ENCODE measurements at regions of chr3 and their contacts with region 1.

Region 1: DNA sequence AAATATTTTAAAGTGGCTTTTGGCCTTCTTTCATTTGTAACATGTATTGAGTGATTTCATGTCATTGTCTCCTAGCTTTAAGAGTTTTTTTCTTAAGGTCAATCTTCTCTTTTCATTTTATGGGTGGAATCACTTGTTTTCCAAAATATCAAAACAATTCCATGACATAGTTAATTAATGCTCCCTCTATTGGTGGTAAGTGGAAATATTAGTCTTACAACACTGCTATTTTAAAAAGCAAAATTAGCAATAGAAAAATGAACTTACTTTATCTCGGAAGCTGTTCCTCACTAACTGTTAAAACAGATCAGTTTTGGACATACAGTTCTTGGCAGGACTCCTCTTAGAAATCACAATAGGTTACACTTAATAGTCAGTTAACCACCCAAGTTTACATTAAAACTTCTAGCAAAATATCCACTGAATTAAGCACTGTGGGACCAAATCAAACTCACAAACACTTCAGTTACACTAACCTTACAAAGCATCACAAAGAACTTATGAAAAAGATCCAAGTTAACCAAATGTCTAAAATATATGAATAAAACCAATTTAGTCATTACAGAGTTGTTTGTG is 42.4 kb downstream of the TIGIT start:
- DNase-seq: no peak
- H3K4me3 ChIP-seq: no peak overlapping the region
- H3K27ac ChIP-seq: no peak overlapping the region
- H3K4me1 ChIP-seq: peaks cover 0 to 10% (median 6%) of the 10 kb centered on the region in 4 experiments; a peak in 4 of 7 replicates
- H3K27me3 ChIP-seq: no peaks in the 10 kb centered on the region
- CTCF ChIP-seq: peak in 1 of 3 experiments; percentile 25; a peak in 1 of 4 replicates
- EP300 ChIP-seq: no peak
- POLR2A ChIP-seq: no peak
- RAD21 ChIP-seq: no peak

Region 2: GRCh38 chr3:114272271-114272670 is 63.9 kb before region 1 on chr3:
- CTCF ChIA-PET with region 1: no interaction called
- POLR2A ChIA-PET with region 1: no interaction called
- DNase-seq: no peak
- H3K4me3 ChIP-seq: no peak overlapping the region
- H3K27ac ChIP-seq: no peak overlapping the region
- H3K4me1 ChIP-seq: no peaks in the 10 kb centered on the region
- H3K27me3 ChIP-seq: no peaks in the 10 kb centered on the region
- CTCF ChIP-seq: no peak
- EP300 ChIP-seq: no peak
- POLR2A ChIP-seq: no peak
- RAD21 ChIP-seq: no peak

Region 3: GRCh38 chr3:114356066-114356465 is 19.9 kb after region 1 on chr3:
- CTCF ChIA-PET with region 1: interaction called, 12 read pairs
- POLR2A ChIA-PET with region 1: no interaction called
- DNase-seq: peak in 1 of 2 experiments; percentile 19
- H3K4me3 ChIP-seq: peak overlapping the region in 1 of 4 experiments; percentile 25; a peak in 2 of 8 replicates
- H3K27ac ChIP-seq: no peak overlapping the region
- H3K4me1 ChIP-seq: peaks cover 7 to 18% (median 12%) of the 10 kb centered on the region in 4 experiments
- H3K27me3 ChIP-seq: no peaks in the 10 kb centered on the region
- CTCF ChIP-seq: no peak
- EP300 ChIP-seq: no peak
- POLR2A ChIP-seq: no peak
- RAD21 ChIP-seq: no peak

Measured in H1 (cell line).